ENCODE measurements at regions of chr7 and their contacts with region 1.

Region 1: GRCh38 chr7:99997545-99998137 is 17.8 kb upstream of the ZKSCAN1 start:
- DNase-seq: peak; percentile 49 to 89 (median 68)
- ATAC-seq: peak; percentile 91
- H3K4me3 ChIP-seq: peak overlapping the region; percentile 48
- H3K4me3 Mint-ChIP-seq: peak overlapping the region; percentile 82
- H3K27ac ChIP-seq: peak overlapping the region; percentile 42 to 66
- H3K27ac Mint-ChIP-seq: peak overlapping the region; percentile 90
- H3K4me1 ChIP-seq: peaks cover 21% of the 10 kb centered on the region
- H3K4me1 Mint-ChIP-seq: peaks cover 22% of the 10 kb centered on the region
- H3K27me3 ChIP-seq: no peaks in the 10 kb centered on the region
- H3K27me3 Mint-ChIP-seq: no peaks in the 10 kb centered on the region
- CTCF ChIP-seq: no peak

Region 2: GRCh38 chr7:100049441-100050311 is 52.0 kb after region 1 on chr7 and contains the start of gene ZSCAN21:
- CTCF ChIA-PET with region 1: no interaction called
- POLR2A ChIA-PET with region 1: interaction called, 7 read pairs
- intact Hi-C with region 1: loop called (anchors 5 to 10 kb)
- DNase-seq: peak; percentile 59 to 89 (median 74)
- ATAC-seq: peak; percentile 88
- H3K4me3 ChIP-seq: peak within 1 kb of the TSS; percentile 97
- H3K4me3 Mint-ChIP-seq: peak within 1 kb of the TSS; percentile 95
- H3K27ac ChIP-seq: peak within 1 kb of the TSS; percentile 77 to 88
- H3K27ac Mint-ChIP-seq: peak within 1 kb of the TSS; percentile 96
- H3K4me1 ChIP-seq: peaks cover 18% of the 10 kb centered on the region
- H3K4me1 Mint-ChIP-seq: peaks cover 25% of the 10 kb centered on the region
- H3K27me3 ChIP-seq: no peaks in the 10 kb centered on the region
- H3K27me3 Mint-ChIP-seq: no peaks in the 10 kb centered on the region
- CTCF ChIP-seq: peak; percentile 20
- total RNA-seq, gene ZSCAN21: 2.0 to 2.7 TPM